K562 (cell line): ENCODE measurements at regions of chr10 and their contacts with region 1.

Region 1: DNA sequence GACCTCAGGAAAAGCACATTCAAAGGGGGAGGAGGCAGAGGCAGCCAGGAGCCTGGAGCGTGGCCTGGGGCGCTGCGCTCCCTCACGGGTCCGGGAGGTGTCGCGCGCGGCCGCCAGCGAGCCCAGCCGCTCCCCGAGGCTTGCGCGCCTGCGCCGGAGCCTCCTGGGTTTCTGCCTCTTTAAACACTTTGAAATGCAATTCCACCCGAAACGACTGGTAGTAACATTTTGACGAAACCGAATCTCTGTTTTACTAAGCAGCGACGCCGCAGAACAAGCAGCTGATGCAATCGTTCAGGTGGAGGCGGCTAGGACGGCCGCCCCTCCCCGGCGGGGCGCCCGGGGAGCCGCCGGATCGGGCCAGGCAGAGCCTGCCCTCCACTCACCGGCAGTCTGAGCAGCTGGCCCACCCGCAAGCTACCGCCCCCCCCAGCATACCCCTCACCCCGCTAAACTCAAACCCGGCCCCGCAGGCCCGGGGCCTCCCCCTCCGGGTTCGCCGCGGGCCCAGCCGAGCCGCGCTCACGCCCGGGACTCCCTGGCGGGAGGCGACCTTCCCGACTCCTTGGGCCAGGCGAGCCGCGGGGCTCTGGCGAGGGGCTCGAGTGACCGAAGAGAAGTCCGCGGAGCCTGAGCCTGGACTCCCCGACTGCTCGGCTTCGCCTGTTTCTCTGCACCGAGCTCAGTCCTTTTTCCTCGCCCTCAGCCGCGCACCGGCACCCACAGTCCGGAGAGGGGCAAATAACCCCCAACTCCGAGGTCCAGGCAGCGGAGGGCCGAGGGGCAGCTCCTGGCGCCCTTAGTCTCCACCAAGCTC is 3.2 kb downstream of the MKX start:
- DNase-seq: peak; percentile 74 to 78 (median 76)
- ATAC-seq: peak; percentile 100
- H3K4me3 ChIP-seq: peak overlapping the region; percentile 46
- H3K27ac ChIP-seq: no peak overlapping the region
- H3K4me1 ChIP-seq: peaks cover 0 to 21% of the 10 kb centered on the region in 2 experiments; a peak in 2 of 5 replicates
- H3K27me3 ChIP-seq: peaks cover 11 to 31% of the 10 kb centered on the region in 2 experiments
- CTCF ChIP-seq: peak; percentile 72 to 84 (median 75)
- EP300 ChIP-seq: no peak
- POLR2A ChIP-seq: no peak
- RAD21 ChIP-seq: peak; percentile 68

Region 2: GRCh38 chr10:28179006-28179742 is 436.8 kb after region 1 on chr10:
- CTCF ChIA-PET with region 1: no interaction called
- POLR2A ChIA-PET with region 1: no interaction called
- in situ Hi-C with region 1: no loop called
- intact Hi-C with region 1: loop called (anchors 1 kb)
- DNase-seq: peak; percentile 41 to 65 (median 42)
- ATAC-seq: peak; percentile 78
- H3K4me3 ChIP-seq: no peak overlapping the region
- H3K27ac ChIP-seq: no peak overlapping the region
- H3K4me1 ChIP-seq: no peaks in the 10 kb centered on the region
- H3K27me3 ChIP-seq: no peaks in the 10 kb centered on the region
- CTCF ChIP-seq: peak; percentile 45 to 77 (median 49); a peak in 4 of 6 replicates
- EP300 ChIP-seq: no peak
- POLR2A ChIP-seq: no peak
- RAD21 ChIP-seq: peak; percentile 79 to 81